Heart left ventricle (tissue), 16 donors: ENCODE measurements at regions of chr1 and their contacts with region 1.

Region 1: GRCh38 chr1:94801919-94802546 is 18.1 kb upstream of the SLC44A3 start:
- DNase-seq: peak in 3 of 5 donors; percentile 29 to 47 (median 40)
- ATAC-seq: peak; percentile 76 to 87 (median 82)
- H3K4me3 ChIP-seq: peak overlapping the region in 8 of 12 donors; percentile 2 to 40 (median 24)
- H3K27ac ChIP-seq: peak overlapping the region; percentile 28 to 80 (median 64)
- H3K4me1 ChIP-seq: peaks cover 0 to 62% (median 32%) of the 10 kb centered on the region in 12 donors
- H3K27me3 ChIP-seq: no peaks in the 10 kb centered on the region
- CTCF ChIP-seq: peak; percentile 12 to 73 (median 53)
- POLR2A ChIP-seq: no peak

Region 2: GRCh38 chr1:94481473-94481933 is 320.5 kb before region 1 on chr1:
- intact Hi-C with region 1: loop called (anchors 1 to 10 kb)
- DNase-seq: peak in 4 of 5 donors; percentile 23 to 32 (median 26)
- ATAC-seq: peak; percentile 82 to 92 (median 92)
- H3K4me3 ChIP-seq: no peak overlapping the region
- H3K27ac ChIP-seq: peak overlapping the region in 1 of 12 donors; percentile 39
- H3K4me1 ChIP-seq: peaks cover 0 to 4% (median 0%) of the 10 kb centered on the region in 12 donors
- H3K27me3 ChIP-seq: no peaks in the 10 kb centered on the region
- CTCF ChIP-seq: peak; percentile 72 to 88 (median 81)
- POLR2A ChIP-seq: no peak

Region 3: GRCh38 chr1:94522304-94522703 is 279.7 kb before region 1 on chr1:
- intact Hi-C with region 1: loop called in 9 of 10 experiments (anchors 1 to 5 kb)
- DNase-seq: no peak
- ATAC-seq: peak in 2 of 4 donors; percentile 55 to 64
- H3K4me3 ChIP-seq: no peak overlapping the region
- H3K27ac ChIP-seq: no peak overlapping the region
- H3K4me1 ChIP-seq: peaks cover 0 to 7% (median 0%) of the 10 kb centered on the region in 12 donors
- H3K27me3 ChIP-seq: no peaks in the 10 kb centered on the region
- CTCF ChIP-seq: peak in 11 of 12 donors; percentile 21 to 70 (median 54)
- POLR2A ChIP-seq: no peak

Region 4: GRCh38 chr1:94541175-94542087 is 260.6 kb before region 1 on chr1 and contains the start of gene F3:
- intact Hi-C with region 1: loop called in 1 of 10 experiments (anchors 5 kb)
- DNase-seq: peak; percentile 89 to 95 (median 93)
- ATAC-seq: peak; percentile 91 to 94 (median 94)
- H3K4me3 ChIP-seq: peak within 1 kb of the TSS; percentile 48 to 87 (median 74)
- H3K27ac ChIP-seq: peak within 1 kb of the TSS; percentile 80 to 95 (median 92)
- H3K4me1 ChIP-seq: peaks cover 0 to 39% (median 25%) of the 10 kb centered on the region in 12 donors
- H3K27me3 ChIP-seq: no peaks in the 10 kb centered on the region
- CTCF ChIP-seq: peak in 3 of 12 donors; percentile 10 to 25 (median 15)
- POLR2A ChIP-seq: peak; percentile 83 to 91
- total RNA-seq, gene F3: 28.6 to 88.8 (median 50.1) TPM

Region 5: DNA sequence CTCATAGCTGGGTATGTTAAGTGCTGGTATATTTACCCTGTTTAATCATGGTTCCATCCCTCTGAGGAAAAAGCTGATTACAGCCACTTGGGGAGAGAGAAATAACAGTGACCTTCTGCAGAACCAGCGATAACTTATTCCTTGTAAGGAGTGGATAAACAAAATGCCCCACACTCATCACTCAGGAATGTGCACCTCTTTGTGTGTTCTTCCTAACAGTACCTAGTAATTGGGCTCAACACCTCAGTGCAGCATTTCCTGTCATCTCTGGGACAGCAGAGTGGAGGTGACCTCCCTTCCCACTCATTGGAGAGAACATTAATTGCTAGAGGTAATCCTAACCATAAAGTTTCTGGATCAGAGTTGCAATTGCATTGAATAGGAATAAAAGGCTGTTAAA is 148.0 kb before region 1 on chr1:
- intact Hi-C with region 1: loop called in 6 of 10 experiments (anchors 5 to 10 kb)
- DNase-seq: no peak
- ATAC-seq: peak in 3 of 4 donors; percentile 18 to 45 (median 43)
- H3K4me3 ChIP-seq: no peak overlapping the region
- H3K27ac ChIP-seq: peak overlapping the region in 8 of 12 donors; percentile 21 to 81 (median 62)
- H3K4me1 ChIP-seq: peaks cover 0 to 32% (median 11%) of the 10 kb centered on the region in 12 donors
- H3K27me3 ChIP-seq: no peaks in the 10 kb centered on the region
- CTCF ChIP-seq: no peak
- POLR2A ChIP-seq: no peak

Region 6: DNA sequence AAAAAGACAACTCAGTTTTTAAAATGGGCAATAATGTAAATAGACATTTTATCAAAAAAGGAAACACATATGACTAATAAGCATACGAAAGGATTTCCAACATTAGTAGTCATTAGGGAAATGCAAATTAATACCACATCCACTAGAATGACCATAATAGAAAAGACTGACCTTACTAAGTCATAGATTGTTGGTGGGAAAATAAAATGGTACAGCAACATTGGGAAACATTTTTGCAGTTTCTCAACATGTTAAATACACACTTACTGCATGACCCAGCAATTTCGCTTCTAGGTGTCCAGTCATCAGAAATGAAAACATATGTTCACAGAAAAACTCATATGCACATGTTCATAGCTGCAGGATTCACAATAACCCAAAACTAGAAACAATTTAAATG is 11.8 kb before region 1 on chr1:
- intact Hi-C with region 1: no loop called
- DNase-seq: no peak
- ATAC-seq: no peak
- H3K4me3 ChIP-seq: no peak overlapping the region
- H3K27ac ChIP-seq: no peak overlapping the region
- H3K4me1 ChIP-seq: peaks cover 0 to 36% (median 18%) of the 10 kb centered on the region in 12 donors
- H3K27me3 ChIP-seq: peaks cover 0 to 3% (median 0%) of the 10 kb centered on the region in 9 donors
- CTCF ChIP-seq: no peak
- POLR2A ChIP-seq: no peak